Left ventricle myocardium superior (tissue), 1 donor: ENCODE measurements at regions of chr1 and their contacts with region 1.

Region 1: DNA sequence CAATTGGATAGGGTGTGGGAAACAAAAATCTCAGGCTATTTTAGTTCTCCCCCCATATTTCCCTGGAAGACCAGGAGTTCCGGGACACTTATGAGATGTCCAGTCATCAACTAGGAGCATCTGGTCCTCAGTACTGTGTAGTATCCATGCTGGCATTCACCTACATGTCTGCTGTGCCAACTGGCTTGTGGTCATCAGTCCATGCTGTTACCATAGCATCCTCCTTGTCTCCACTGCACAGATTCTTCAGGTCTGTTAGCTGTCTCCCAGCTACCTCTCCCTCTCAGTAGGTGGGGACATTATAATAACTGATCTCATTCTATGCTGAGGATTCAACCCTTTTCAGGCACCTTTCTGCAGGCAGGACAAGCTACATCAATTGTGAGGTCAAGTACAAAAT is 302.9 kb downstream of the BARHL2 start:
- DNase-seq: no peak
- ATAC-seq: no peak

Region 2: DNA sequence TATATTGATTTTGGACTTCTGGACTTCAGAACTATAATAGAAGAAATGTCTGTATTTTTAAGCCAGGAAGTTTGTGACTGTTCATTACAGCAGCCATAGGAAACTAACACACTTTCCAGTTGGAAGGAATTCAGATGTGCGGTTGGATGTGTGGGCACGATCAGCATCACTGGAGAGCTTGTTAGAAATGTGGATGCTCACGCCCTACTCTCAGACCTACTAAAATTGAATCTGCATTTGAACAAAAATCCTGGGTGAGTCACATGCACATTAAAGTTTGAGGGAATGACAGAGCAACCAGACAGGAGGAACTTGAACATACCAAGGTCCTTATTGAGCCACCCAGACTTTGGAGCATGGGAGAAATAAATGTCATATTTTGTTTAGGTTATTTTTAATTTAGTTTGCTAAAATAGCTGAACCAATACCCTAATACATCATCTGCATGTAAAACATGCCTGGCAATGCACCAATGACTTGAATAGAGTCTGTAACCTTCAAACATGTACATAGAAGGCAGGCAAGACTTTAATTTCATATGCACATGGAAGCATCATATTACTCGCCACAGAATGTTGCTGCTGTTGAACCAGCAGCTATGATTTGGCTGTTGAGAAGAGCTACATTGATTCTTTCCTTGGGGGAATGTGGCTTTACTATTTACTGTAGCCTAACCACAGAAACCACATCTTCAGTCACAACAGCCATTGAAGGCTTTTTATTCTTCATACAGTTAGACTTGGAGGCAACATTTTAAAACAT is 43.3 kb before region 1 on chr1:
- intact Hi-C with region 1: no loop called
- DNase-seq: no peak
- ATAC-seq: no peak

Region 3: GRCh38 chr1:90472775-90473174 is 58.6 kb after region 1 on chr1:
- intact Hi-C with region 1: loop called (anchors 2 kb)
- DNase-seq: no peak
- ATAC-seq: no peak